ENCODE measurements at regions of chr5 and their contacts with region 1.

Region 1: GRCh38 chr5:40904205-40904993 is 4.9 kb upstream of the C7 start:
- DNase-seq: peak; percentile 68
- ATAC-seq: peak; percentile 99
- H3K4me3 Mint-ChIP-seq: no peak overlapping the region
- H3K27ac Mint-ChIP-seq: no peak overlapping the region
- H3K4me1 Mint-ChIP-seq: peaks cover 14% of the 10 kb centered on the region
- H3K27me3 Mint-ChIP-seq: no peaks in the 10 kb centered on the region
- CTCF ChIP-seq: peak; percentile 87

Region 2: DNA sequence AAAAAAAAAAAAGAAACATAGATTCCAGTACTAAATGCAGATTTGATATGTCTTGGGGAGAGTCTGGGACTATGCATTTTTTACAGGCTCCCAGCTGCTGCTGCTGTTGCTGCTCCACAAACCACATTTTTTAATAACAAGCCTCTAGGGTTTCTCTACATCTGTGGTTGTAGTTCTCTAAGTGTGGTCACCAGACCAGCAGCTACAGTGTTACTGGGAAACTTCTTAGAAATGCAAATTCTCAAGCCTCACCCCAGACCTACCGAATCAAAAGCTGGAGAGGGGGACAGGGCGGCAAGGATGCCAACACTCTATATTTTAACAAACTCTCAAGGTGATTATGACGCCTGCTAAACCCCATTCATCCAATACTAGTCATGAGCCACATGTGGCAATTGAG is 518.1 kb before region 1 on chr5:
- CTCF ChIA-PET with region 1: no interaction called
- POLR2A ChIA-PET with region 1: no interaction called
- DNase-seq: no peak
- ATAC-seq: peak; percentile 62
- H3K4me3 Mint-ChIP-seq: no peak overlapping the region
- H3K27ac Mint-ChIP-seq: no peak overlapping the region
- H3K4me1 Mint-ChIP-seq: peaks cover 26% of the 10 kb centered on the region
- H3K27me3 Mint-ChIP-seq: no peaks in the 10 kb centered on the region
- CTCF ChIP-seq: no peak

Region 3: GRCh38 chr5:41122459-41122858 is 218.1 kb after region 1 on chr5:
- CTCF ChIA-PET with region 1: interaction called, 10 read pairs
- POLR2A ChIA-PET with region 1: no interaction called
- DNase-seq: peak; percentile 18
- ATAC-seq: peak; percentile 81
- H3K4me3 Mint-ChIP-seq: no peak overlapping the region
- H3K27ac Mint-ChIP-seq: peak overlapping the region; percentile 15
- H3K4me1 Mint-ChIP-seq: peaks cover under 1% of the 10 kb centered on the region
- H3K27me3 Mint-ChIP-seq: no peaks in the 10 kb centered on the region
- CTCF ChIP-seq: no peak

Region 4: DNA sequence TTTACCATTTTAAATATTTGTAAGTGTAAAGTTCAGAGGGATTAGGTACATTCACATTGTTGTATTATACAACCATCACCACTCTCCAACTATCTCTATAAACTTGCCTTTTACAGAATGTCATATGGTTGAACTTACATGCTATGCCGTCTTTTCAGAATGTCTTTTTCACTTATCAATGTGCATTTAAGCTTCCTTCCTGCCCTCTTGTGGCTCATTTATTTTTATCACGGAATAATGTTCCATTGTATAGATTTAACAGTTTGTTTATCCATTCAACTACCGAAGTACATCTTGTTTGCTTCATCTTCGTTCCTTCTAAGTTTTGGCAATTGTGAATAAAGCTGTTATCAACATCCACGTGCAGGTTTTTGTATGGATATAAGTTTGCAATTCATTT is 442.2 kb after region 1 on chr5:
- CTCF ChIA-PET with region 1: interaction called, 12 read pairs
- POLR2A ChIA-PET with region 1: interaction called, 5 read pairs
- DNase-seq: no peak
- ATAC-seq: no peak
- H3K4me3 Mint-ChIP-seq: no peak overlapping the region
- H3K27ac Mint-ChIP-seq: no peak overlapping the region
- H3K4me1 Mint-ChIP-seq: no peaks in the 10 kb centered on the region
- H3K27me3 Mint-ChIP-seq: no peaks in the 10 kb centered on the region
- CTCF ChIP-seq: no peak

Region 5: DNA sequence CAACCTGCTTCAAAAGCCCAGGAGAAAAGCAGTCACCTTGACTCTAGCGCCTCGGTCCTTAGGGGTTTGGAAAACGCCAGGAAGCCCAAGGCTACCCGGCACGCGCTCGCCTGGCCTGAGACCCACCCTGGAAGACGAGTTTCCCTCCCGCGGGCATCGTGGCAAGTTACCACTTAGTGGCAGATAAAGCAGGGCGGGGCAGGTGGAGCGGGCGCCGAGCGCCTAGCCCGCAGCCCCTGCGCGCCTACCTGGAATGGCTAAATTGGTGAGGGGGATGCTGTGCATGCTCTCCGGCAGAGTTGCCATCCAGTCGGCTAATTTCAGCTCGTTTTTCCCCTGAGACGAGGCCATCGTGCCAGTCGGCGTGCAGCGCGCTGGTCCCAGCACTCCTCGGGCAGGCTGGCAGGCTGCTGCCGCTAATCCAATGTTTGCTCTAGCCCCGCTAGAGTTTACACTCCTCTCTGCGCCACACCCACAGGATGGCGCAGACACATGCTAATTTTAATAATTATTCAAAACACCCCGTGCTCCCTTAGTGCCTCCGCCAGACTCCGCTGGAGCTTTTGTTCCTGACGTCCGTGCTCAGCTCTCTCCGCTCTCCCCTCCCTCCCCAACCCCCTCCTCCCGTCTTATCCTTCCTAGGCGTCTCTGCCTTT is 605.9 kb after region 1 on chr5 and contains the start of gene PLCXD3:
- CTCF ChIA-PET with region 1: interaction called, 12 read pairs
- POLR2A ChIA-PET with region 1: no interaction called
- DNase-seq: peak; percentile 36
- ATAC-seq: peak; percentile 76
- H3K4me3 Mint-ChIP-seq: peak within 1 kb of the TSS; percentile 76
- H3K27ac Mint-ChIP-seq: no peak within 1 kb of the TSS
- H3K4me1 Mint-ChIP-seq: peaks cover 25% of the 10 kb centered on the region
- H3K27me3 Mint-ChIP-seq: peaks cover 39% of the 10 kb centered on the region
- CTCF ChIP-seq: no peak
- total RNA-seq, gene PLCXD3: 0.04 to 0.07 TPM (median 0.07 TPM) in 3 replicates

Measured in WTC11 (cell line).